ENCODE measurements at regions of chr9 and their contacts with region 1.

Region 1: DNA sequence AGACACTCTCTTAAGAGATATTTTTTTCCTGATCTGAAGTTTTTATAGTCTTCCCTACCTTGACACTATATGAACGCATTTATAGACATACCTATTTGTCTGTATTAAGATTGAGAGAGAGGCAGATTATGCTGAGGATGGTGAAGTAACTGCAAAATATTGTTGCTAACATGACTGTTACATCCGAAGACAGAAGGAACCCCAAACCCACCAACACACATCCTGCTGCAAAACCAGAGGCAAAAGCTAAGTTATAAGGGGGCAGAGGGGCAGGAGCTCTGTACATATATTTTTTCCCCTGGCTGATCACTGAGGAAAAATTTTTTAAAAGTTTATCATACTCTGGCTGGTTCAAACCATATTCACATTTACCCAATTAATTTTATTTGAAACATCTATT is 279.0 kb downstream of the MLLT3 start:
- DNase-seq: no peak
- H3K4me3 ChIP-seq: no peak overlapping the region
- H3K27ac ChIP-seq: no peak overlapping the region
- H3K4me1 ChIP-seq: no peaks in the 10 kb centered on the region
- H3K27me3 ChIP-seq: no peaks in the 10 kb centered on the region
- CTCF ChIP-seq: no peak

Region 2: DNA sequence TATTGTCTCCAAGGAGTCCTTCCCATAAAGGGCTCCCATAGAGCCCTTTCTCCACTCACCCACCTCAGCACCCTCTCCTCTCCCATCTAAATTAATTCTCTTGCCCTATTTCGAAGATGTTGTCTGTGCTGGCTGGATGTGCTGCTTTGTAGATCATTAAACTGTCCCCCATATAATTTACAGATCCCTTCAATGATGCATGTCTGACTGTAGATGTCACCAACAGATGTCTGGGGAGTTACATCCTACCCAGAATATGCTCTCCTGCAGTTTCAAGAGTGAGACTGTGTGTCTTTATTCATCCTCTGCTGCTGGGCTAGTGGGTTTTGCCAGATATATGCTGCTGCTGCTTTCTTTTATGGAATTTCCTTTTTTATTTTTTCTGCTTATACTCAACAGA is 72.2 kb before region 1 on chr9:
- CTCF ChIA-PET with region 1: no interaction called
- POLR2A ChIA-PET with region 1: interaction called, 10 read pairs
- intact Hi-C with region 1: no loop called
- DNase-seq: no peak
- H3K4me3 ChIP-seq: no peak overlapping the region
- H3K27ac ChIP-seq: no peak overlapping the region
- H3K4me1 ChIP-seq: no peaks in the 10 kb centered on the region
- H3K27me3 ChIP-seq: no peaks in the 10 kb centered on the region
- CTCF ChIP-seq: no peak

Region 3: GRCh38 chr9:20419533-20419932 is 76.2 kb after region 1 on chr9:
- CTCF ChIA-PET with region 1: no interaction called
- POLR2A ChIA-PET with region 1: no interaction called
- intact Hi-C with region 1: no loop called
- DNase-seq: no peak
- H3K4me3 ChIP-seq: no peak overlapping the region
- H3K27ac ChIP-seq: no peak overlapping the region
- H3K4me1 ChIP-seq: no peaks in the 10 kb centered on the region
- H3K27me3 ChIP-seq: no peaks in the 10 kb centered on the region
- CTCF ChIP-seq: no peak